Activated CD4-positive, alpha-beta T cell treated with anti-CD3 and anti-CD28 coated beads for 36 hours (primary cell): ENCODE measurements at regions of chr9 and their contacts with region 1.

Region 1: GRCh38 chr9:125374443-125375309 is 113.0 kb downstream of the GAPVD1 start:
- DNase-seq: peak; percentile 85
- ATAC-seq: peak; percentile 97
- H3K4me3 Mint-ChIP-seq: peak overlapping the region; percentile 26
- H3K27ac Mint-ChIP-seq: no peak overlapping the region
- H3K4me1 Mint-ChIP-seq: peaks cover 2% of the 10 kb centered on the region
- H3K27me3 Mint-ChIP-seq: no peaks in the 10 kb centered on the region

Region 2: DNA sequence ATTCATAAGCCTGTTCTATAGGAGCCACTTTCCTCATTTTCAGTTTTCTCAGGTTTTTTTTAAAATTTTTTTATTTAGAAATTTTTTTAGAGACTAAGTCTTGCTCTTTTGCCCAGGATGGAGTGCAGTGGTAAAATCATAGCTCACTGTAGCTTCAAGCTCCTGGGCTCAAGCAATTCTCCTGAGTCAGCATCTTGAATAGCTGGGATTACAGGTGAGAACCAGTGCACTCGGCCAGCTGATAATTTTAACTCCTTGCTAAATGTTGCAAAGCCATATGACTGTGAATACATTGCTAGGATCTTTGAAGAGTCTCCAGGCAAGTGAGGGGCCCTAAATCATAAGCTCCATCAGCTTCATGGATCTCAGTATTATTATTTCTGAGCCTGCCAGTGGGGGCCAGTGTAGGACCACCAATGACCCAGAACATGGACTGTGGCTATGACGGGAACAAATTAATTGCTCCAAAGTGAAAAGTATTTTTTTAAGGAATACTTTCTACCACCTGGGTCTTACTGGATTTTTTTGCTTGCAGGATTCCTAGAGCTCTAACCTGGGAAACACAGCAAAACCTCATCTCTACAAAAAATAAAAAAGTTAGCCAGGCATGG is 118.8 kb before region 1 on chr9:
- CTCF ChIA-PET with region 1: interaction called, 3 read pairs
- POLR2A ChIA-PET with region 1: no interaction called
- intact Hi-C with region 1: loop called (anchors 1 to 5 kb)
- DNase-seq: no peak
- ATAC-seq: peak; percentile 39
- H3K4me3 Mint-ChIP-seq: no peak overlapping the region
- H3K27ac Mint-ChIP-seq: no peak overlapping the region
- H3K4me1 Mint-ChIP-seq: peaks cover 6% of the 10 kb centered on the region
- H3K27me3 Mint-ChIP-seq: no peaks in the 10 kb centered on the region

Region 3: DNA sequence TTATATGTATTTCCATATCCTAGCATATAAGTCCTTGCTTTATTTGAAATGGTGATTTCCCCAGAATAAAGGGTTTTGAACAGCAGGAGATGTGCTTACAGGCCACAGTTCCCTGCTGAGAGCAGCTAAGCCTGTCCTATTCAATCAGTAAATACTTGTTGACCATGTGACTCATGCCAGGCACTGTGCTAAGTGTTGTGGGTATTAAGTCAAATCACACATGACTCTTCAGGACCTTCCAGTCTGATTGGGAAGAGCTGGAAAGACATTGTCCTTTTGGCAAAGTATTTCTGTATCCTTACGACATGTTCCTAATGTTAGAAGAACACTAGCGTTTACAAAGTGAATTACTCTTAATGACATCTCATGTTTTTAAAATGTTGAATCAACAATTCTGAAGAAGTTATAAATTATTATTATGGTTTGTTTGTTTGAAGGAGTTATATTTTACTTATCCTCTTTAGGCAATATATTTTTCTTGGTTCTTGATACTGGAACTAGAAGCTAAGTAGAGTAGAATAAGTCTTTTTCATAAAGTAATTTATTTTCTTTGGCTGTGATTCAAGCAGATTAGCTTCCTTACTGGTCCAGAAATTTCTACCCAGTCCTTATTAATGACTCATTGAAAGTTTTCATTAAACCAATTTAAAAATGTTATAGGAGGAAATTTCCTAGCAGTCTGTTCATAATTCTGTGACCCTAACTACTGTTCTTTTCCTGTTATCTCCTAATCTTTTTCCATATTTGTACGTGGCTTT is 31.0 kb before region 1 on chr9:
- CTCF ChIA-PET with region 1: no interaction called
- POLR2A ChIA-PET with region 1: no interaction called
- intact Hi-C with region 1: no loop called
- DNase-seq: no peak
- ATAC-seq: no peak
- H3K4me3 Mint-ChIP-seq: no peak overlapping the region
- H3K27ac Mint-ChIP-seq: no peak overlapping the region
- H3K4me1 Mint-ChIP-seq: no peaks in the 10 kb centered on the region
- H3K27me3 Mint-ChIP-seq: no peaks in the 10 kb centered on the region

Region 4: DNA sequence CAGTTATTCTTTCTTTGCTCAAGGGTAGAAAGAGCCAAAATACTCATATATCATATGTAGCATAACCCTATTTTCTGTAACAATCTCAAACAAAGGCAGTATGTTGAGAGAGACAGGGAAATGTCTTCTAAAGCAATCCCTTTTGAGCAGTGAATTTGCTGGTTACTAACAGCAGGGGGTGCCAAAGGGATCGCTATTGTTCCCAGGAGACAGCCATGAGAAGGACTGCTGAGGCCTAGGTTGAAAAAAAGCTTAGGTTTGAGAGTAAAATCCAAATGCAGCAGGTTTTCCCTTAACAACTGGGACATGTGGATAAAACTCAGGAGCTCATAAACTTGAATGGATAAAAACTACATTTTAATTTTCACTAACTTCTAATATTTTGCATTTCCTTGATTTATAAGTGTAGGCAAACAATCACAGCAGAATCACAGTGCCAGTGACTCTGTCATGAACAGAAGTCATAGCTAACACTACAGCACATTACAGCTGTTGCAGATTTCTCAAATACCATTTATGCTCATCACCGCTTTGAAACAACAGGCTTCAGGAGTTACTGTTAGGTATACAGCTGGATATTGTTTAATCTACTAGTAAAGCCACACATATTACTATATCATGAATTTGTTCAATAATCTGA is 183.9 kb after region 1 on chr9:
- CTCF ChIA-PET with region 1: no interaction called
- POLR2A ChIA-PET with region 1: no interaction called
- intact Hi-C with region 1: no loop called
- DNase-seq: peak; percentile 71
- ATAC-seq: peak; percentile 72
- H3K4me3 Mint-ChIP-seq: no peak overlapping the region
- H3K27ac Mint-ChIP-seq: no peak overlapping the region
- H3K4me1 Mint-ChIP-seq: peaks cover 11% of the 10 kb centered on the region
- H3K27me3 Mint-ChIP-seq: no peaks in the 10 kb centered on the region